Activated CD4-positive, alpha-beta memory T cell treated with anti-CD3 and anti-CD28 coated beads, Interleukin-2, amount 10 ng/mL, durations not matched to agents 7 days and 5 days (primary cell): ENCODE measurements at regions of chr5 and their contacts with region 1.

Region 1: DNA sequence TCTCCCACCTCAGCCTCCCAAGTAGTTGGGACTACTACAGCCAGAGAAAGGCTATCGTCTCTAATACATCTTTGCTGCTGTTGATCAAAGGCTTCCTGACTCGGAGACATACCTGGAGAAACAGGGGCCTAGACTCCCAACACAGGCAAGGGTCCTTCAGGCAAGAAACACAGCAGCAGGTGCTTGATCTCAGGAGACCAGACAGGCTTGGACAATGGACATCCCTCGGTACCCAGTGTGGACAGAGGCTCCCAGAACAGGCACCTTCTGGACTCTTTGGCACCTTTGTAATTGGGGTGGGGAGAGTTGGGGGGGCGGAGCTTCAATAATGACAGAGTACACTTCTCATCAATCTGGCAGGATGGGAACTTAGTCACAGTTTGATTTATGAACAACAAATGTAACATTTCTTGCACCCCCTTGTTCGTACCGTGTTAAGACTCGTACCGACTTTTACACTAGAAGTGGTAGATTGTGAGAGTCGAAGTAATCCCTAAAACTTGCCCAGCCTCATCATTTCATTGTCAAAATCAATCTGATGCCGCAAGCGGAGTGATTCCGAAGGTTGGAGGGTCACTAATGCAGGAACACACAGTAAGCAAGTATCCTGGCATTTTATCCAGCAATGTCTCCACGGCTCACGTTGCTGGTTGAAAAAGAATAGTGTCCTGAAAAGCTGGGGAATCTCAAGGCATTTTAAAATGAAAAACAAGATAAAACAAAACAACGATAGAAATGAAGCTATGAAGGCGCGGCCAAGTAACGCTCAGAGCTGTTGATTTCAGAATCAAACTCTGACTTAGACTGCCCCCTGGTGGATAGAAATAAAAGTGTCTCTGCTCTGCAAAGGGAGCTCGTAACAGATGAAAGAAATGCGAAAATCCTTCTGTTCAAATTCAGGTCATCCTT is 46.4 kb upstream of the STK32A start:
- DNase-seq: peak; percentile 23
- H3K4me3 Mint-ChIP-seq: no peak overlapping the region
- H3K27ac Mint-ChIP-seq: no peak overlapping the region
- H3K4me1 Mint-ChIP-seq: no peaks in the 10 kb centered on the region
- H3K27me3 Mint-ChIP-seq: peaks cover 3% of the 10 kb centered on the region

Region 2: GRCh38 chr5:146533260-146533857 is 655.1 kb before region 1 on chr5:
- CTCF ChIA-PET with region 1: interaction called, 49 read pairs
- POLR2A ChIA-PET with region 1: no interaction called
- DNase-seq: peak; percentile 78
- H3K4me3 Mint-ChIP-seq: no peak overlapping the region
- H3K27ac Mint-ChIP-seq: no peak overlapping the region
- H3K4me1 Mint-ChIP-seq: peaks cover 11% of the 10 kb centered on the region
- H3K27me3 Mint-ChIP-seq: peaks cover under 1% of the 10 kb centered on the region

Region 3: GRCh38 chr5:146541958-146542849 is 646.2 kb before region 1 on chr5:
- CTCF ChIA-PET with region 1: interaction called, 49 read pairs
- POLR2A ChIA-PET with region 1: no interaction called
- DNase-seq: peak; percentile 71
- H3K4me3 Mint-ChIP-seq: no peak overlapping the region
- H3K27ac Mint-ChIP-seq: no peak overlapping the region
- H3K4me1 Mint-ChIP-seq: no peaks in the 10 kb centered on the region
- H3K27me3 Mint-ChIP-seq: peaks cover 2% of the 10 kb centered on the region

Region 4: DNA sequence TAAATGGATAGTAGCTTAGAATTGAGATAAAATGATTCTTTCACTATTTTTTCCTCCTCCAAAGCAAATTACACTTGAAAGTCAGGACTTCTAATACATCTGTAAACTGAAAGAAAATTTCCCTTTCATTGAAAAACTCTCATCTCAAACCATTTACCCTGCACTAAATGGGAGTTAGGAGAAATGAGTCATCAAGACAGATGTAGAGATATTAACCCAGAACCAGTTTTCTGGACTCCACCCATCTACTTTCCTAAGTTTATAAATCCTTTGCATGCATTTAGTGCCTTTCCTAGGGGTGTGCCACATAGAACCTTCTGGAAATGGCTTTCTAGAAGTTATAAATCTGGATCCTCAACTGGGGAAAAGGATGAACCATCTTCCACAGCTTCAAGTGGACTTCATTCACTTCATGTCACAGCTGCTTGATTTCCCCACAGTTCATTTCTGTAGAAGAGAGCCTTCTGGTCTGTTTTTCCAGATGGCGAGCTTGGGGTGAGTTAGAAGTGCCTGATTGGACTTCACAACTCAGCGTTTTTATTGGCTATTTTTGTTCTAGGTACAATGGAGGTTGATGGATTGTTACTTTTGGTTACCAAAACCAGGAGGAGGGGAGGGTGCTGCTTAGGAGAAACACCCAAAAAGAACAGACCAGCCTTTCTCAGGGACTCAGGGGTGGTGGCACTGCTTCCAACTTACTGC is 600.0 kb before region 1 on chr5:
- CTCF ChIA-PET with region 1: no interaction called
- POLR2A ChIA-PET with region 1: no interaction called
- DNase-seq: no peak
- H3K4me3 Mint-ChIP-seq: no peak overlapping the region
- H3K27ac Mint-ChIP-seq: no peak overlapping the region
- H3K4me1 Mint-ChIP-seq: peaks cover 11% of the 10 kb centered on the region
- H3K27me3 Mint-ChIP-seq: no peaks in the 10 kb centered on the region

Region 5: GRCh38 chr5:147098233-147098790 is 90.1 kb before region 1 on chr5:
- CTCF ChIA-PET with region 1: interaction called, 14 read pairs
- POLR2A ChIA-PET with region 1: no interaction called
- DNase-seq: peak; percentile 19
- H3K4me3 Mint-ChIP-seq: no peak overlapping the region
- H3K27ac Mint-ChIP-seq: no peak overlapping the region
- H3K4me1 Mint-ChIP-seq: no peaks in the 10 kb centered on the region
- H3K27me3 Mint-ChIP-seq: no peaks in the 10 kb centered on the region

Region 6: GRCh38 chr5:147176422-147176821 is 12.0 kb before region 1 on chr5:
- CTCF ChIA-PET with region 1: interaction called, 26 read pairs
- POLR2A ChIA-PET with region 1: no interaction called
- DNase-seq: no peak
- H3K4me3 Mint-ChIP-seq: no peak overlapping the region
- H3K27ac Mint-ChIP-seq: no peak overlapping the region
- H3K4me1 Mint-ChIP-seq: no peaks in the 10 kb centered on the region
- H3K27me3 Mint-ChIP-seq: no peaks in the 10 kb centered on the region

Region 7: GRCh38 chr5:147200001-147200400 is 11.5 kb after region 1 on chr5:
- CTCF ChIA-PET with region 1: interaction called, 13 read pairs
- POLR2A ChIA-PET with region 1: no interaction called
- DNase-seq: no peak
- H3K4me3 Mint-ChIP-seq: no peak overlapping the region
- H3K27ac Mint-ChIP-seq: no peak overlapping the region
- H3K4me1 Mint-ChIP-seq: no peaks in the 10 kb centered on the region
- H3K27me3 Mint-ChIP-seq: peaks cover 1% of the 10 kb centered on the region

Region 8: GRCh38 chr5:147303976-147304375 is 115.5 kb after region 1 on chr5:
- CTCF ChIA-PET with region 1: no interaction called
- POLR2A ChIA-PET with region 1: no interaction called
- DNase-seq: no peak
- H3K4me3 Mint-ChIP-seq: no peak overlapping the region
- H3K27ac Mint-ChIP-seq: no peak overlapping the region
- H3K4me1 Mint-ChIP-seq: no peaks in the 10 kb centered on the region
- H3K27me3 Mint-ChIP-seq: no peaks in the 10 kb centered on the region